ENCODE measurements at regions of chr12 and their contacts with region 1.

Region 1: GRCh38 chr12:22544038-22544979 is at the start of gene C2CD5:
- DNase-seq: peak; percentile 87 to 93
- H3K4me3 ChIP-seq: peak within 1 kb of the TSS; percentile 74 to 89 (median 81)
- H3K27ac ChIP-seq: peak within 1 kb of the TSS; percentile 81
- H3K4me1 ChIP-seq: peaks cover 4 to 5% (median 4%) of the 10 kb centered on the region in 4 experiments
- H3K27me3 ChIP-seq: no peaks in the 10 kb centered on the region
- CTCF ChIP-seq: peak; percentile 23 to 39 (median 32)
- EP300 ChIP-seq: peak in 1 of 2 experiments; percentile 89; a peak in 1 of 3 replicates
- POLR2A ChIP-seq: peak in 1 of 2 experiments; percentile 80; a peak in 2 of 3 replicates
- RAD21 ChIP-seq: peak; percentile 28 to 32; a peak in 2 of 4 replicates
- total RNA-seq, gene C2CD5: 40.4 and 45.9 TPM in 2 replicates

Region 2: GRCh38 chr12:22505826-22506225 is 38.5 kb before region 1 on chr12:
- CTCF ChIA-PET with region 1: no interaction called
- POLR2A ChIA-PET with region 1: no interaction called
- DNase-seq: no peak
- H3K4me3 ChIP-seq: no peak overlapping the region
- H3K27ac ChIP-seq: no peak overlapping the region; the same call in 1 of the 2 replicates
- H3K4me1 ChIP-seq: no peaks in the 10 kb centered on the region
- H3K27me3 ChIP-seq: no peaks in the 10 kb centered on the region
- CTCF ChIP-seq: no peak
- EP300 ChIP-seq: no peak
- POLR2A ChIP-seq: no peak
- RAD21 ChIP-seq: no peak

Region 3: DNA sequence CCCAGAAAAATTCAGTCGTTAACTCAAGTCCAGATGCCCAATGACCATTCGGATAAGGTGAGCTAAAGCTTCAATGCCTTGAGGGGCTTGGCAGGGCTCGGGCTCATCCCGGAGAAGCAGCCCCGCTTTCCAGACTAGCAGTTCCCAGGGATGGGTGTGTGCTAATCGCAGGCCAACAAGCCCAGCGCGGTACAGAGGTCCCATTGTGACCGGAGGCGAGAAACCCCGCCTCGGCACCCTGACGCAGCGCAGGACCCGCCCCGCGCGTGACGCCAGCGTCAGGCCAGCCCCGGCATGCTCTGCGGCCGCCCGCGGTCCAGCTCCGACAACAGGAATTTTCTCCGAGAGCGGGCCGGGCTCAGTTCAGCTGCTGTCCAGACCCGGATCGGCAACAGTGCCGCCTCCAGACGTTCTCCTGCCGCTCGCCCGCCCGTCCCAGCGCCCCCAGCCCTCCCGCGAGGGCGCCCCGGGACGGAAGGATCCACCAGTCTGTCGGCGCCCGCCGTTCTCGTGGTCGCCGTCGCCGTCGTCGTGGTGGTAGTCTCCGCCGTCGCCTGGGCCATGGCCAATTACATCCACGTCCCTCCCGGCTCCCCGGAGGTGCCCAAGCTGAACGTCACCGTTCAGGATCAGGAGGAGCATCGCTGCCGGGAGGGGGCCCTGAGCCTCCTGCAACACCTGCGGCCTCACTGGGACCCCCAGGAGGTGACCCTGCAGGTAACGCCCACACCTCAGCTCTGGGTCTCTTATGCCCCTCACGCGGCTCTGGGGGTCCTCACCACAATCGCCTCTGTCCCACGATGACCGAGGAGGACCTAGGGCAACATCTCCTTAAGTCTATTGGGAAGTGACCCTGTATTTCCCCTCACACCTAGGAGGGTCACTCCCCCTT is 80.8 kb after region 1 on chr12 and contains the start of gene ETNK1:
- CTCF ChIA-PET with region 1: interaction called, 7 read pairs
- POLR2A ChIA-PET with region 1: interaction called, 13 read pairs
- DNase-seq: peak; percentile 84 to 94
- H3K4me3 ChIP-seq: peak within 1 kb of the TSS; percentile 65 to 88 (median 84)
- H3K27ac ChIP-seq: peak within 1 kb of the TSS; percentile 96
- H3K4me1 ChIP-seq: peaks cover 0 to 9% (median 5%) of the 10 kb centered on the region in 4 experiments; a peak in 4 of 7 replicates
- H3K27me3 ChIP-seq: no peaks in the 10 kb centered on the region
- CTCF ChIP-seq: no peak
- EP300 ChIP-seq: peak in 1 of 2 experiments; percentile 27; a peak in 1 of 3 replicates
- POLR2A ChIP-seq: peak; percentile 83 to 96
- RAD21 ChIP-seq: no peak
- total RNA-seq, gene ETNK1: 66.9 and 82.7 TPM in 2 replicates

Measured in H1 (cell line).